ENCODE measurements at regions of chr11 and their contacts with region 1.

Region 1: GRCh38 chr11:60485986-60486385 is 6.6 kb upstream of the MS4A12 start:
- DNase-seq: peak; percentile 88
- ATAC-seq: peak; percentile 93
- H3K4me3 ChIP-seq: no peak overlapping the region
- H3K4me3 Mint-ChIP-seq: no peak overlapping the region
- H3K27ac ChIP-seq: no peak overlapping the region
- H3K27ac Mint-ChIP-seq: peak overlapping the region; percentile 4
- H3K4me1 ChIP-seq: peaks cover 39 to 47% of the 10 kb centered on the region in 2 donors
- H3K4me1 Mint-ChIP-seq: peaks cover 54% of the 10 kb centered on the region
- H3K27me3 ChIP-seq: no peaks in the 10 kb centered on the region
- H3K27me3 Mint-ChIP-seq: no peaks in the 10 kb centered on the region
- CTCF ChIP-seq: peak; percentile 96

Region 2: DNA sequence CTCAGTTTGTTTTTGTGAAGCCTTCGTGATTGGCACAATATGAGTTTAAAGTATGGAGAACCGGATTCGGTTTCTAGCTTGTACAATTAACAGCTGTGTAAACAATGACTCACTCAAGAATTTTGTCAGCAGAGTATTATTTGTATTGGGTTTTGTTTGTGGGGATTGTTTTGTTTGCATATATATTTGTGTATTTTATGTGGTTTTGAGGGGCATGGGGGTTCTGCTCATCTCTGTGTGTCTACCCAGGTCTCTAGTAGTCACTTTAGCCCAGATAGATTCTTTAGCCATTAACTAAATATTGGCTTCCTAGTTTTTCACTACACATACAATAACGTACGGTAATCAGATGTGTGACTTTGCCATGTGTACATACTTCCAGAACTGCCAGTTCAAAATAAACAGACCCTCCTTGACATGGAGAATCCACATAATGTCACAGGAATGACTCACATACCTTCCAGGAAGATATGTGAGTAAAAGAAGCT is 115.1 kb before region 1 on chr11:
- CTCF ChIA-PET with region 1: interaction called, 162 read pairs
- POLR2A ChIA-PET with region 1: interaction called, 9 read pairs
- intact Hi-C with region 1: no loop called
- DNase-seq: no peak
- ATAC-seq: no peak
- H3K4me3 ChIP-seq: no peak overlapping the region
- H3K4me3 Mint-ChIP-seq: no peak overlapping the region
- H3K27ac ChIP-seq: no peak overlapping the region
- H3K27ac Mint-ChIP-seq: no peak overlapping the region
- H3K4me1 ChIP-seq: peaks cover 55 to 57% of the 10 kb centered on the region in 2 donors
- H3K4me1 Mint-ChIP-seq: peaks cover 75% of the 10 kb centered on the region
- H3K27me3 ChIP-seq: no peaks in the 10 kb centered on the region
- H3K27me3 Mint-ChIP-seq: no peaks in the 10 kb centered on the region
- CTCF ChIP-seq: no peak

Region 3: DNA sequence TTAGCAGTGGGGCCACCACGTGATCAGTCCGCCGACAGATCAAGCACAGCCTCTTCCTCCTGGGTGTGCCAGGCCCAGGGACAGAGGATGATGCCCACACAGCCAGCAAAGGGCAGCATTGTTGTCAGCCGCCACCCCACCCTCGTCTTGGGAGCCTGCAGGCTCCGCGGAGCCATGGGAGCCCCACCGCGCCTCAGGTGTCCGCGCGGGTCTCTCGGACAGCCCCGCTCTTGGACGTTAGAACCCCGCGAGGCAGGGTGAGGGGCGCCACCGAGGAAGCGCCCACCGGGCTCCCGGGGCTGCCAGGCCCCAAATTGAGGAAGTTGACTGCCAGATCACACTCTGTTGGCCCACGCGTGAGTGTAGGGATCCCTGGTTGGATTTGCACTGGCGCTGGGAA is 129.5 kb after region 1 on chr11:
- CTCF ChIA-PET with region 1: interaction called, 36 read pairs
- POLR2A ChIA-PET with region 1: no interaction called
- intact Hi-C with region 1: loop called (anchors 1 kb)
- DNase-seq: no peak
- ATAC-seq: no peak
- H3K4me3 ChIP-seq: no peak overlapping the region
- H3K4me3 Mint-ChIP-seq: no peak overlapping the region
- H3K27ac ChIP-seq: no peak overlapping the region
- H3K27ac Mint-ChIP-seq: no peak overlapping the region
- H3K4me1 ChIP-seq: peaks cover 0 to 7% of the 10 kb centered on the region in 2 donors
- H3K4me1 Mint-ChIP-seq: peaks cover 7% of the 10 kb centered on the region
- H3K27me3 ChIP-seq: no peaks in the 10 kb centered on the region
- H3K27me3 Mint-ChIP-seq: peaks cover 8% of the 10 kb centered on the region
- CTCF ChIP-seq: no peak